Endothelial cell of umbilical vein (primary cell): ENCODE measurements at regions of chr9 and their contacts with region 1.

Region 1: DNA sequence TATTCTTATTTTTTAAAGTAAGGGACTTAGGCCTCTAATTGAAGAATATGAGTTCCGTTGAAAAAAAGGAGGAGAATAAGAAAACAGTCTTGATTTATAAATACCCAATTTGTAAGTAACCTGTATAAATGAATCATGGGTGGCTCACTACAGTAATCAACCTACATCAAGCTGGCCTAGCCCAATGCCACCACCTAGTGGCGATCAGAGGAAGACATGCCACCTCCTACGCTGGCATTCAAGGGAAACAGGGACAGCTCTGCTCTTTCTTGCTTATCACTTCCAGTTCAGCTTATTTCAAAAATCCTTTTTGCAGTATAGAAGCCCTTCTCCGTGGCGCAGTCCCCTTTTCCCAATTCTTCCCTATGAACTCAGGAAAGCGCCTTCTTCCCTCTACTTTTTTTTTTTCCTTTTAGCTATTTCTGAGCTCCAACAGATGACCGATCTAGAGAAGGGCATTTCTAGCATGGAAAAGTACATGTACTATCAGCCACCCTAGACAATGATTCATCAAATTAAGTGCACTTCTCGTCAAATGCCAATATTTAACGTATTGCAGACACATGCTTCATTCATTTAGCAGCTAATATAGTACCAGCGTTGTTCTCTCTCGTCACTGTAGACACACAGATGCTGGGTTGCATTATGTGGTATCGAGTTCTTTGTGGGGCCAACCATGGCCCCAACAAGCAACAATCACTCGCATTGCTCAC is 28.3 kb downstream of the PTPN3 start:
- DNase-seq: peak; percentile 77
- H3K4me3 ChIP-seq: no peak overlapping the region
- H3K27ac ChIP-seq: no peak overlapping the region
- H3K4me1 ChIP-seq: no peaks in the 10 kb centered on the region
- H3K27me3 ChIP-seq: peaks cover 36 to 37% of the 10 kb centered on the region in 2 experiments
- CTCF ChIP-seq: peak; percentile 85 to 87
- POLR2A ChIP-seq: no peak

Region 2: DNA sequence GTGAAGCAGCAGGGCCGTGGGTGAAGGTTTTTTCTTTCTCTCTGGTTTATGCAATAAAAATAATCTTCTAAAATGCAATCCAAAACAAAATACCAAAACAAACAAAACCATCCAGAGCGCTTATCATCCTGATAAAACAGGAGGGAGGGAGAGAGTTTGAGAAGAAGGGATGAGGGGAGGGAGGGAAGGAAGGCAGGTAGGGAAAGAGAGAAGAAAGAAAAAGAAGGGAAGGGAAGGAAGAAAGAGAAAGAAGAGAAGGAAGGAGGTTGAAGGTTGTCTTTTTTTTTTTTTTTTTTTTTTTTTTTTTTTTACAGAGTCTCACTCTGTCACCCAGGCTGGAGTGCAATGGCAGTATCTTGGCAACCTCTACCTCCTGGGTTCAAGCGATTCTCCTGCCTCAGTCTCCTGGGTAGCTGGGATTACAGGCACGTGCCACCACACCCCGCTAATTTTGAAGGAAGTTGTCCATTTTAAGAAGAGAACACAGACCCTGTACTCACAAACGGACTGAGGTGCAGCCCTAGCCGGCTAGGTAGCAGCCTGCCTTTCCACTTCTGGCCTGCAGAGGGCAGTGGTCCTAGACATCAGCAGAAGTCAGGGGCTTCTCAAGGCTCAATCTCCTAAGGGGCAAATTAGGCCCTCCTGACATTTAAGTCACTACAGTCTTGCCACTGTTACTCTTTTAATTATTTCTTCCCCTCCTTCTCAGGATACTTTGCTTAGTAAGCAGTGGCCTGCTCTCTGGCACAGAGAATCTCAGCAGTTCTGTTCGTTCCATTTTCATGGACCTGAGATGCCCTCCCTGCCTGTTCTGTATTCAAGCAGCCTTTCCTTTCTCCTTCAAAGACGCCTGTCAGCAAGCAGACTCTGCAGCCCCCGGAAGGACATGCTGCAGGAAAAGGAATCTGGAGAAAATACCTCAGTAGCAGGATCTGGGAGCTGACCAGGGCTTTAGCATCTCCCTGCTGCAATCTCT is 225.4 kb before region 1 on chr9:
- CTCF ChIA-PET with region 1: interaction called, 6 read pairs
- POLR2A ChIA-PET with region 1: no interaction called
- dilution Hi-C with region 1: no loop called
- intact Hi-C with region 1: loop called (anchors 1 kb)
- DNase-seq: peak; percentile 75
- H3K4me3 ChIP-seq: no peak overlapping the region
- H3K27ac ChIP-seq: no peak overlapping the region
- H3K4me1 ChIP-seq: peaks cover 13% of the 10 kb centered on the region
- H3K27me3 ChIP-seq: no peaks in the 10 kb centered on the region
- CTCF ChIP-seq: peak; percentile 87 to 97
- POLR2A ChIP-seq: no peak

Region 3: DNA sequence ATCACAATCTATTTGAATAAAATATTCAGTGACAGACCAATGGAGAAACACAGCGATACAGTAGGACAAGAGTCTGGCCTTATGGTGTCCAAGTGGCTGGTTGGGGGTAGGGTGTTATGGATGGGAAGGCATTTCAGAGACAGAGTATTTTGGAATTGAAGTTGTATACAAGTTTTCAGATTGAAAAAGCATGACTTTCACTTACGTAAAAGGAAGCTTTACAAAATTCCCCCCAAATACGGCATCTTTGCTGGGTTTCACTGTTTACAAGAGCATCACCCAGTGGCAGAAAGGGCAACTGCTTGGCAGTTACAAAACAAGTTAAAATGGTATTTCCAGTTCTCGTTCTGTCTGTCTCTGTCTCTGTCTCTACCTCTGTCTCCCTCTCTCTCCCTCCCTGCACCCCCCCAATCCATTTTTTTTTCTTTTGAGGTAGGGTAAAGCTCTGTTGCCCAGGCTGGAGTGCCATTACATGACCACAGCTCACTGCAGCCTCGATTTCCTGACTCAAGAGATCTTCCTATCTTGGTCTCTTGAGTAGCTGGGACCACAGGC is 57.9 kb before region 1 on chr9:
- CTCF ChIA-PET with region 1: interaction called, 10 read pairs
- POLR2A ChIA-PET with region 1: no interaction called
- dilution Hi-C with region 1: no loop called
- intact Hi-C with region 1: no loop called
- DNase-seq: no peak
- H3K4me3 ChIP-seq: no peak overlapping the region
- H3K27ac ChIP-seq: no peak overlapping the region
- H3K4me1 ChIP-seq: no peaks in the 10 kb centered on the region
- H3K27me3 ChIP-seq: no peaks in the 10 kb centered on the region
- CTCF ChIP-seq: peak; percentile 49 to 50
- POLR2A ChIP-seq: no peak

Region 4: GRCh38 chr9:109453210-109453842 is 16.5 kb before region 1 on chr9:
- CTCF ChIA-PET with region 1: interaction called, 21 read pairs
- POLR2A ChIA-PET with region 1: no interaction called
- dilution Hi-C with region 1: no loop called
- intact Hi-C with region 1: no loop called
- DNase-seq: peak; percentile 54
- H3K4me3 ChIP-seq: no peak overlapping the region
- H3K27ac ChIP-seq: no peak overlapping the region
- H3K4me1 ChIP-seq: no peaks in the 10 kb centered on the region
- H3K27me3 ChIP-seq: peaks cover 15 to 31% of the 10 kb centered on the region in 2 experiments
- CTCF ChIP-seq: no peak
- POLR2A ChIP-seq: no peak

Region 5: DNA sequence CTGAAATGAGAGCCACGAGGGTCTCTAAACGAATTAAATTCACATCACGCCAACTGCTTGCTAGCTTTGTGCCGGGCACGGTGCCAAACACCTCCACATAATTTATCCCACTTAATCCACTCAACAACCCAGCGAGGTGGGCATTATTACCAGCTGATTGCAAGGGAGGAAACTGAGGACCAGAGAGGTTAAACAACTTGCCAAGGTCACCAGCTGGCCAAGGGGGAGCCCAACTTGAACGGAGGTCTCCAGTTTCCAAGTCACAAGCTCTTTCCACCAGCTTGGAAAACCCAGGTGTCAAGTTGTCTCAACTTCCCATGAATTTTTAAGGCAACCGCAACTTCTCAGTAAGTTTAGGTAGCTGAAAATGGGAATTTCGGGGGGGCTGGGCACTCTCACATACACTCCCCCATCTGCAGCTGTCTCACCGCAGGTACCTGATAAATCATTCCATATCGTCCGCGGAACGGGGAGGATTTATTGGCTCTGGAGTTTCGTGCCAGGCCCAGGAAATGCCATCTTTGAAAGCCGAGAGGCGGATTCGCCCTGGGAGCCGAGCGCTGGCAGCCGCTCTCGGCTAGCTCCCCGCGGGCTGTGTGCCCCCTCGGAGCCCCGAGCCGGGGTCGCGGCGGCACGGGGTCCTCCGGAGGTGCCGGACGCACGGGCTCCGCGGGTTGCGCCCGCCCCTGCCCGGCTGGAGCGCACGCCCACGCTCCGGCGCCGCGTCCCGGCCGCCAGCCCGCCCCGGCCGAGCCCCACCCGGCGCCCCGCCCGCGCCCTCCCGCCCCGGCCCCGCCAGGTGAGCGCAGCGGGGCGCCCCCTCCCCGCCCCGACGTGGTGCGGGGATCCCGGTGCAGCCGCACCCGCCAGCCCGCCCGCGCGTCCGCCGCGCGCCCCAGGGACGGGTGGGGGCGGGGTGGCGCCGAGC is 27.7 kb after region 1 on chr9:
- CTCF ChIA-PET with region 1: interaction called, 11 read pairs
- POLR2A ChIA-PET with region 1: no interaction called
- dilution Hi-C with region 1: no loop called
- intact Hi-C with region 1: no loop called
- DNase-seq: no peak
- H3K4me3 ChIP-seq: peak overlapping the region in 1 of 3 experiments; percentile 11
- H3K27ac ChIP-seq: no peak overlapping the region
- H3K4me1 ChIP-seq: no peaks in the 10 kb centered on the region
- H3K27me3 ChIP-seq: peaks cover 55 to 73% of the 10 kb centered on the region in 2 experiments
- CTCF ChIP-seq: no peak
- POLR2A ChIP-seq: no peak

Region 6: DNA sequence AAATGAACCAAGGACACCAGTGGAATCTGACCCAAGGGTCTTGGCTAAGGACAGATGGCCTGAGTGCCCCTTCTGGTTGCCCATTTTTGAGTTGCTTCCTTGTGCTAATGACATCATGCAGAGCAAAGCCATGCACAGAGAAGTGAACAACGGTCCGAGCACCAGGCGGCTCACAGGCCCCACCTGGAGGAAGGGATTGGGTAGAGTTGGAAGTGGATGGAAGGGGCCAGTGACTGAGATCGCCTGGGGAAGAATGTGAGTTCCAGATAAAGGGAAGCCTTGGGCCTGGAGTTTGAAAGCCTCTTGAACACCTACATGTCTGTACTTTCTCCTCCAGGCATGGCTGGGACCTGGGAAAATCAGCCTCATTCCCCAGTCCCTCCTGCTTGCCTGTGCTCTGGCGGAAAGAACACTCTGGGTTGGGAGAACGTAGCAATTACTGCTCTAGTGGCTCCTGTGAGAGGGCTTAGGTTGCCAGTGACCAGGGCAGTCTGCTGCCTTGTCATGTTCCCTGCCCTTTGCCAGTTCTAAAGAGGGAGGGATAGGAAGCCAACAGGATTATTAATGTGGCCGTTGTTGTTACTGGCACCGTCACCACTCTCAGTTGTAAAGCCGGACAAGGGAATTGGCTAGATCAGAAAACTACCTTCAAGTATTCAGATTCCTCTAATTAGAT is 90.8 kb after region 1 on chr9:
- CTCF ChIA-PET with region 1: no interaction called
- POLR2A ChIA-PET with region 1: no interaction called
- dilution Hi-C with region 1: no loop called
- intact Hi-C with region 1: no loop called
- DNase-seq: no peak
- H3K4me3 ChIP-seq: no peak overlapping the region
- H3K27ac ChIP-seq: no peak overlapping the region
- H3K4me1 ChIP-seq: no peaks in the 10 kb centered on the region
- H3K27me3 ChIP-seq: no peaks in the 10 kb centered on the region
- CTCF ChIP-seq: no peak
- POLR2A ChIP-seq: no peak